ENCODE measurements at regions of chr2 and their contacts with region 1.

Region 1: GRCh38 chr2:120856421-120856862 is 120.8 kb downstream of the GLI2 start:
- DNase-seq: peak; percentile 77 to 82
- H3K4me3 ChIP-seq: no peak overlapping the region
- H3K4me3 Mint-ChIP-seq: no peak overlapping the region
- H3K27ac Mint-ChIP-seq: peak overlapping the region; percentile 55
- H3K4me1 ChIP-seq: peaks cover 10% of the 10 kb centered on the region
- H3K4me1 Mint-ChIP-seq: peaks cover 11% of the 10 kb centered on the region
- H3K27me3 ChIP-seq: no peaks in the 10 kb centered on the region
- H3K27me3 Mint-ChIP-seq: no peaks in the 10 kb centered on the region
- CTCF ChIP-seq: peak; percentile 40 to 61

Region 2: DNA sequence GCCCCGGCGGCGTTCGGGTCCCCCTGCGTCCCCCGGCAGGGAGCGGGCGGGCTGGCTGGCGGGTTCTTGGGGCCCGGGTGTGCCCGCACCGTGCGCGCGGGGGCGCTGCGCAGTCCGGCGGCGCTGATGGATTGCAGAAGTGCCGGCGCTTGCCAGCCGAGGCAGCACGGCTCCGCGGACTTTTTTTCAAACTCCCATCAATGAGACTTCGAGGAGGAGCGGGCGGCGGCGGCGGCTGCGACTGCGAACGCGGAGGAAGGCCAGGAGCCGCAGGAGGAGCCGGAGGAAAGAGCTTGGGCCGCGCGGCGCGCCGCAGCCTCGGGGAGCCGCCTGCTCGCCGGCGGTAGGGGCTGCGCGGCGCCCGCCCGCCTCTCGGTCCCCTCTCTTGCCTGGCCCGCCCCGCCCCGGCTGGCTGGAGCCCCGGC is 120.7 kb before region 1 on chr2 and contains the start of gene GLI2:
- CTCF ChIA-PET with region 1: no interaction called
- POLR2A ChIA-PET with region 1: no interaction called
- intact Hi-C with region 1: loop called (anchors 10 kb)
- DNase-seq: peak; percentile 78 to 85
- H3K4me3 ChIP-seq: peak within 1 kb of the TSS; percentile 39
- H3K4me3 Mint-ChIP-seq: peak within 1 kb of the TSS; percentile 84
- H3K27ac Mint-ChIP-seq: no peak within 1 kb of the TSS
- H3K4me1 ChIP-seq: peaks cover 3% of the 10 kb centered on the region; the same call in 1 of the 2 replicates
- H3K4me1 Mint-ChIP-seq: peaks cover 9% of the 10 kb centered on the region
- H3K27me3 ChIP-seq: 0 out of 2 replicates have a peak, but pooled peaks cover 3% of the 10 kb centered on the region
- H3K27me3 Mint-ChIP-seq: peaks cover 21% of the 10 kb centered on the region
- CTCF ChIP-seq: peak; percentile 74 to 75
- total RNA-seq, gene GLI2: 0.58 and 0.70 TPM in 2 replicates

Measured in Caco-2 (cell line).